ENCODE measurements at regions of chr22 and their contacts with region 1.

Region 1: DNA sequence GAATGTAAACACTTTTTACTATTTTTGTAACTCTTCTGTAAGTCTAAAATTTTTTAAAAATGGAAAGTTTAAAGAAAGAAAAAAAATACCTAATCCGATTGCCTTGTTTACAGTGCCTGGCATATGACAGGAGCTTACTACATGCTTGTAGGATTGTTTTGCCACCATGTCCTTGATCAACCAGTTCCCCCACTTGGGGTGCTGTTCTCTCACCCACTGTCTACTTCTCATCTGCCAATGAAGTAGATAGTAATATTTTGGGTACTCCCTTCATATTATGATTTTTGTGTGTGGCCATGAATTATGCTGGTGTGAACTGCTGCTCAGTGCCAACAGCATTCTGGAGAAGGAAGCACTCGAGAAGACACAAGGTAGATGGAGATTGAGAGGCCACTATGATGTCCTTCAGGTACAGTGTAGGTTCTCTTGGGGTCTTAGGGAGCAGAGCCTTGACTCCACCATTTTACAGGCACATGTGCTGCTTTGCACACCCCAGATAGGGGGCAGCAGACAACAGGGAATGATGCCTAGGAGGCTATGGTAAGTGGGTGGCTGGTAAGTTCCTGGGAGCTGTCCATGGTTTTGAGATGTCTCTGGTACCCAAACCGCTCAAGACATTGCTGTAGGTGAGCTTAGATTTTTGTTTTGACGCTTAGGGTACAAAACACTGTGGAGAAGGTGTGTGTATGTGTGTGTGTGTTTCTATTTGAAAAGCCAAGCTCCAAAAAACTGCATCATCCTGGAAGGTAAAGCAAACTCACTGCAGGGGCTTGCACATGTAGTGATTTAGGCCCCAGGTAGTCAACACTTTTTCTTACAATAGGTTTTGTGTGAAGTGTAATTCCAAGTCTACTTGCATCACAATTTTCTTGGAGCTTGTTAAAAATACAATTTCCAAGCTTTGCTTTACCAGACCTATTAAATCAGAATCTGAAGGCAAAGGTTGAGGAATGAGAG is 494.5 kb upstream of the LARGE1 start:
- DNase-seq: peak; percentile 58 to 79
- H3K4me3 ChIP-seq: no peak overlapping the region
- H3K4me1 ChIP-seq: no peaks in the 10 kb centered on the region
- H3K27me3 ChIP-seq: no peaks in the 10 kb centered on the region

Region 2: GRCh38 chr22:34534101-34534500 is 119.3 kb after region 1 on chr22:
- in situ Hi-C with region 1: no loop called
- DNase-seq: no peak
- H3K4me3 ChIP-seq: no peak overlapping the region
- H3K4me1 ChIP-seq: no peaks in the 10 kb centered on the region
- H3K27me3 ChIP-seq: no peaks in the 10 kb centered on the region

Region 3: GRCh38 chr22:35023692-35024363 is 609.1 kb after region 1 on chr22:
- in situ Hi-C with region 1: loop called (anchors 25 kb)
- DNase-seq: peak; percentile 47 to 90
- H3K4me3 ChIP-seq: no peak overlapping the region
- H3K4me1 ChIP-seq: no peaks in the 10 kb centered on the region
- H3K27me3 ChIP-seq: 0 out of 2 replicates have a peak, but pooled peaks cover 2% of the 10 kb centered on the region

Region 4: DNA sequence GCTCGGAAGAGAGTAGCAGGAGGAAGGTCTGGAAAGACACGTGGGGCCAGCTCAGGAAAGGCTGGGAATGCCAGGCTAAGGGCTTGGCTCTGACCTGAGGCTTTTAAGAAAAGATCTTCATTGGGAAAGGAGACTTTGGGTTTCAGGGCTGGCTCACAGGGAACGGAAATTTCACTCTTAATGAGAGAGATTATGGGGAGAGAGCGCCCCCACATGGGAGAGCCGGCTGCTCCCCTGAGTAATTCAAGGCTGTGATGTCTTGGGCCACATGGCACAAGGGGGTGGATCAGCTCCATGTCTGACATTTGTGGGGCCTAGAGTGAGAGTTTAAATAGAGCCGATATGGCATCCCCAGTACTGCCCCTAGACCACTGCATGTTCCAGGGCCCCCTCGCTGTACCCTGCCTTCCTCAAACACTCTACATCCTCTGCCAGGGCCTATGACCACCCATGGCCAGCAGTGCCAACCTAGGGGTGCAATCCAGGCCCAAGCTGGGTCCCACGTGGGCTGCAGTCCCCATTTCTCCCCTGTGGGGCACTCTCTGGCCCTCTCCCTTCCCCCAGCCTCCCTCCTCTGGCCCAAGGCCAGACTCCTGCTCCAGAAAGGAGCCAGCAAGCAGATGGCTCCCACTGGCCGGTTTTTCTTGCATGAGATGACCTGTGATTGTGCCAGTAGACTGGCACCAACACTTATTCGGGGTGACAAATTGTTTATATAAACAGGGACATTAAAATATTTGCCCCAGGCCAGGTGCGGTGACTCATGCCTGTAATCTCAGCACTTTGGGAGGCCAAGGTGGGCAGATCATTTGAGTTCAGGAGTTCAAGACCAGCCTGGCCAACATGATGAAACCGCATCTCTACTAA is 726.4 kb after region 1 on chr22:
- in situ Hi-C with region 1: loop called (anchors 25 kb)
- DNase-seq: no peak
- H3K4me3 ChIP-seq: no peak overlapping the region
- H3K4me1 ChIP-seq: no peaks in the 10 kb centered on the region
- H3K27me3 ChIP-seq: 0 out of 2 replicates have a peak, but pooled peaks cover 4% of the 10 kb centered on the region

Measured in HAP-1 (cell line).